Activated CD4-positive, alpha-beta T cell treated with anti-CD3 and anti-CD28 coated beads for 36 hours (primary cell): ENCODE measurements at regions of chr2 and their contacts with region 1.

Region 1: DNA sequence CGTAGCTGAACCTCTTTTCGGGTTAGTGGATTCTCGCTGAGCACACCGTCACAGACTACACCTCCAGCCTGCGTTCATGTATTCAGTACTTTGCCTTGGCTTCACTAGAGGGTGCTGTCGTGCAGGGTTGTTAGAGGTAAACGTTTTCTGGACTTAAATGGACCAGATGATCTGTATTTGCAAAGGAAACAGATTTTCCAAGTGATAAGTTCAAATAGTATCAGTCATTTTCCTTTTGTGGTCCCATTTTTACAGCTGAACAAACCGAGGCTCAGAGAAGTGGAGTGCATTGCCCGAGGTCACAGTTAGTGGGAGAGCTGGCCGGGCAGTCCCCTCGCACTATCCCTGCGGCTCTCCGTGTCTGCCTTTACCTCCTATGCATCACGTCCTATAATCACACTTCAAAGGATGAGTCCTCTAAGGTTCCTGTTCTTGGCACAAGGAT is 125.9 kb downstream of the MAP4K4 start:
- DNase-seq: peak; percentile 83
- ATAC-seq: peak; percentile 79
- H3K4me3 Mint-ChIP-seq: peak overlapping the region; percentile 20
- H3K27ac Mint-ChIP-seq: peak overlapping the region; percentile 83
- H3K4me1 Mint-ChIP-seq: peaks cover 73% of the 10 kb centered on the region
- H3K27me3 Mint-ChIP-seq: no peaks in the 10 kb centered on the region

Region 2: DNA sequence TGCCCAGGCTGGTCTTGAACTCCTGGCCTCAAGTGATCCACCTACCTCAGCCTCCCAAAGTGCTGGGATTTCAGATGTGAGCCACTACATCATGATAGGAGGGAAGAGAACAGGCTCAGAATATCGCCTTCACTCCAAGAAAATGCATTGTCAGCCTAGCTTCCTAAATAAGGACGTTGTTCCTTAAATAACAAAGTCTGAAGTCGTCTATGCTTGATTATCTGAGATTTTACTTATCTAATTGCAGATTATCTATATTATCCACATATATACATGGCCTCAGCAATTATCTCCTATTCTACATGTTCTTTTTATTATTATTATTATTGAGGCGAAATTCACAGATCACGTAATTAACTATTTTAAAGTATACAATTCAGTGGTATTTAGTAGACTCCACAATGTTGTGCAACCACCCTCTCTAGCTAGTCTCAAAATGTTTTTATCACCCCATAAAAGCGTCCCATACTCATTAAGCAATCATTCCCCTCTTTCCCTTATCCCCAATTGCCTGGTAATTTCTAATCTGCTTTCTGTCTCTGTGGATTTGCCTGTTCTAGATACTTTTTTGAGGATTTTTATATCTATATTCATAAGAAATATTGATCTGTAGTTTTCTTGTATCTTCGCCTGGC is 253.4 kb before region 1 on chr2:
- CTCF ChIA-PET with region 1: no interaction called
- POLR2A ChIA-PET with region 1: no interaction called
- intact Hi-C with region 1: loop called in 1 of 2 experiments (anchors 5 kb)
- DNase-seq: no peak
- ATAC-seq: no peak
- H3K4me3 Mint-ChIP-seq: no peak overlapping the region
- H3K27ac Mint-ChIP-seq: no peak overlapping the region
- H3K4me1 Mint-ChIP-seq: peaks cover 26% of the 10 kb centered on the region
- H3K27me3 Mint-ChIP-seq: no peaks in the 10 kb centered on the region

Region 3: DNA sequence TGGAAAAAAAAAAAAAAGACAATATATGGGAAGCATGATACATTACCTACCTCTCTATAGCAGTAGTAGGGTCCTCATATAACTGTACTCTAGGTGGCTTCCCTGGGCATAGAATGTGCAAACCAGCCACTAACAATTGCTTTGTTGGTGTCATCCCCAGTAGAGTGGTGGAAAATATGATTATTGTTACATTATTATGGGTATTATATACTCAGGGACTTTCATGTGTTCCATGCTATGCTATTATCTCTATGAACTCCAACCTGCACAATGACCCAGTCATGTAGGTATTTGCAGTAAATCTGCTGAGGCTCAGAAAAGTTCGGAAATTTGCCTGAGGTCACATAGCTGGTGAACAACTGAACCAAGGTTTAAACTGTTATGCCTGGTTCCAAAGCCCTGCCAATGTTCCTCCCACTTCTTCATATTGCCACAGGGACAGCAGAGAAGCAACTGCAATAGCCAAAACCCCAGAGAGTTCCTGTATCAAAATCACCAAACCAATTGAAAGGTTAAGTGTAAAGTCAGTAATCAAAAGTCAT is 178.5 kb before region 1 on chr2:
- CTCF ChIA-PET with region 1: no interaction called
- POLR2A ChIA-PET with region 1: no interaction called
- intact Hi-C with region 1: no loop called
- DNase-seq: no peak
- ATAC-seq: no peak
- H3K4me3 Mint-ChIP-seq: no peak overlapping the region
- H3K27ac Mint-ChIP-seq: no peak overlapping the region
- H3K4me1 Mint-ChIP-seq: no peaks in the 10 kb centered on the region
- H3K27me3 Mint-ChIP-seq: no peaks in the 10 kb centered on the region

Region 4: GRCh38 chr2:101697124-101698013 is 126.0 kb before region 1 on chr2 and contains the start of gene MAP4K4:
- CTCF ChIA-PET with region 1: interaction called, 5 read pairs
- POLR2A ChIA-PET with region 1: no interaction called
- intact Hi-C with region 1: loop called in 1 of 2 experiments (anchors 2 kb)
- DNase-seq: peak; percentile 85
- ATAC-seq: peak; percentile 52
- H3K4me3 Mint-ChIP-seq: no peak within 1 kb of the TSS
- H3K27ac Mint-ChIP-seq: peak within 1 kb of the TSS; percentile 68
- H3K4me1 Mint-ChIP-seq: peaks cover 30% of the 10 kb centered on the region
- H3K27me3 Mint-ChIP-seq: no peaks in the 10 kb centered on the region
- total RNA-seq, gene MAP4K4: 62.3 to 70.2 TPM

Region 5: DNA sequence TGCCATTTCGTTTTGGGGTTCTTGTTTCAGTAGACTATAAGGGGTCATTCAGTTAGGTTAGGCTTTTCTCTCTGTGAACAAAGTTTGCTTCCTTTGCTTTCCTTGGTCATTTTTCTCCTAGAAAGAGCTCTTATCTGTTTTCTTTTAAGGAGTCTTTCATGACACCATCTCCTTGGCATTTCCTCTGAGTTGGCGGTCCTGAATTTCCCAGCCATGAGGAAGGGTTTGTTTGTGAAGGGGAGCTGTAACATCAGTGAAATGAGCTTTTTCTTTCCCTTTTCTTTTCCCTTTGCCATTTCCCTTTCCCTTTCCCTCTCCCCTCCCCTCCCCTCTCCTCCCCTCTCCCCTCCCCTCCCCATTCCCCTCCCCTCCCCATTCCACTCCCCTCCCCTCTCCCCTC is 64.2 kb before region 1 on chr2:
- CTCF ChIA-PET with region 1: interaction called, 4 read pairs
- POLR2A ChIA-PET with region 1: no interaction called
- intact Hi-C with region 1: loop called in 1 of 2 experiments (anchors 5 kb)
- DNase-seq: no peak
- ATAC-seq: no peak
- H3K4me3 Mint-ChIP-seq: no peak overlapping the region
- H3K27ac Mint-ChIP-seq: no peak overlapping the region
- H3K4me1 Mint-ChIP-seq: peaks cover 73% of the 10 kb centered on the region
- H3K27me3 Mint-ChIP-seq: no peaks in the 10 kb centered on the region

Region 6: DNA sequence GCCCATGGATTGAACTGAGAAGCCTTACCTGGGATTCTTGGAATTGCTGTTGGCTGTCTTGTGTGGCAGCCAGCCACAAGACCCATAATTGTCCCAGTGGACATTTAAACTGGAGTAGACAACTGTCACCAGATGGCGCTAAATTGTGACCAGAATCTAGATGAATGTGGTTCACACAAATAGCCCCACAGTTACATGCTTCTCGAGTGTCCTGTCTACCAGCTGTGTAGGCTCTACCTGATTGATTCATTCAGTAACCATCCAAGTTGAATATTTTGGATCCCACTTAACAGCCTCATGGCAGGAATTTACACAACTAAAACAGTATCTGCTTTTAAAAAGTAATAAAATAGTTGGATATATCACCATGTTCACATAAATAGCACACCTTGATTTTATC is 52.6 kb before region 1 on chr2:
- CTCF ChIA-PET with region 1: interaction called, 6 read pairs
- POLR2A ChIA-PET with region 1: no interaction called
- intact Hi-C with region 1: loop called in 1 of 2 experiments (anchors 2 kb)
- DNase-seq: peak; percentile 36
- ATAC-seq: no peak
- H3K4me3 Mint-ChIP-seq: no peak overlapping the region
- H3K27ac Mint-ChIP-seq: peak overlapping the region; percentile 51
- H3K4me1 Mint-ChIP-seq: peaks cover 89% of the 10 kb centered on the region
- H3K27me3 Mint-ChIP-seq: no peaks in the 10 kb centered on the region

Region 7: DNA sequence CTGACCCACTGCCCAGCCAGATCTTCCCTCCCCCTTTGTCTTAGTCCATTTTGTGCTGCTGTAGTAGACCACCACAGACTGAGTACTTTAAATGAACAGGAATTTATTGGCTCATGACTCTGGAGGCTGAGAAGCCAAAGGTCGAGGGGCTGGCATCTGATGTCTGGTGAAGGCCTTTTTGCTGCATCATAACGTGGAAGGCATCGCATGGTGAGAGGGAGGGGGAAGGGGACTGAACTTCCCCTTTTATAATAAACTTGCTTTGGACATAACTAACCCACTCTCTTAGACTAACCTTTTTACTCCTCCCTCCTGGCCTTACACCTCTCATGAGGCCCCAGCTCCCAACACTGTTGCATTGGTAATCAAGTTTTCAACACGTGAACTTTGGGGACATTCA is 42.0 kb before region 1 on chr2:
- CTCF ChIA-PET with region 1: interaction called, 5 read pairs
- POLR2A ChIA-PET with region 1: interaction called, 3 read pairs
- intact Hi-C with region 1: loop called in 1 of 2 experiments (anchors 5 kb)
- DNase-seq: no peak
- ATAC-seq: peak; percentile 6
- H3K4me3 Mint-ChIP-seq: peak overlapping the region; percentile 39
- H3K27ac Mint-ChIP-seq: peak overlapping the region; percentile 75
- H3K4me1 Mint-ChIP-seq: peaks cover 82% of the 10 kb centered on the region
- H3K27me3 Mint-ChIP-seq: no peaks in the 10 kb centered on the region

Region 8: GRCh38 chr2:102005989-102006885 is 182.9 kb after region 1 on chr2:
- CTCF ChIA-PET with region 1: no interaction called
- POLR2A ChIA-PET with region 1: no interaction called
- intact Hi-C with region 1: no loop called
- DNase-seq: peak; percentile 67
- ATAC-seq: peak; percentile 27
- H3K4me3 Mint-ChIP-seq: peak overlapping the region; percentile 5
- H3K27ac Mint-ChIP-seq: peak overlapping the region; percentile 77
- H3K4me1 Mint-ChIP-seq: peaks cover 16% of the 10 kb centered on the region
- H3K27me3 Mint-ChIP-seq: no peaks in the 10 kb centered on the region